ENCODE measurements at regions of chr20 and their contacts with region 1.

Region 1: DNA sequence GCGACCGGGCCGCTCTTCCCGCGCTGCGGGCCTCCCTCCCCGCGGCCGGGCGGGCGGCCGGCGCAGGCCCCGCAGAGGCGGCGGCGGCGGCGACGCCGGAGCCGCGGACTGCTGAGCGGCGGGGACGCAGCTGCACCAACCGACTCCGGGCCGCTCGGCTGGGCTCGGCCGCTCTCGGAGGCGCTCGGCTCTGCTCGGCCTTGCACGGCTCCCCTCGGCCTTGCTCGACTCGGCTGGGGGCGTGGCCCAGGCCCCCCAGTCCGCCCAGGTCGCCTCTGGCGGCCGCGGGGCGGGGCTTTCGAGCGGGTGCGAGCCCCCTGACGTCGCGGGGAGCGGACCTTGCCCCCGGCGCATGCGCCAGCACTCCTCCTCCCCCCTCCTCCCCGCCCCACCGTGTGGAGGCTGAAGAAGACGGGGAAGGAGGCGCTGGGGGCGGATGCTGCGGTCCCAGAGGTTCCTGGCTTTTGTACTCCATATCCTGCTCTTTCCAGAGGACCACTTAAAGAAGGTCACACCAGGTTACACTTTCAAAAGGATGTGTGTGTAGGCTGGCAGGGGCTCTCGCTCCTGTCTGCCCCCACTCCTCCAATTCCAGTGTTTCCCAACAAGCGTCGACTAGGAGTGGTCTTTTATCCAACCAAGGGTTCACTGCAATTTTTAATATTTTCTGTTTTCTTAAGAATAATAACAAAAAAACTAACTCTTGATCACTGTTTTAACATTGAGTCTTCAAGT is at the start of gene ZHX3:
- DNase-seq: peak; percentile 99
- H3K4me3 ChIP-seq: peak within 1 kb of the TSS; percentile 58 to 91 (median 72)
- H3K27ac ChIP-seq: peak within 1 kb of the TSS; percentile 87 to 95 (median 92)
- H3K4me1 ChIP-seq: peaks cover 0 to 35% (median 23%) of the 10 kb centered on the region in 4 donors
- H3K27me3 ChIP-seq: no peaks in the 10 kb centered on the region
- CTCF ChIP-seq: no peak
- EP300 ChIP-seq: no peak
- POLR2A ChIP-seq: no peak
- total RNA-seq, gene ZHX3: 39.2 to 69.0 (median 51.1) TPM

Region 2: DNA sequence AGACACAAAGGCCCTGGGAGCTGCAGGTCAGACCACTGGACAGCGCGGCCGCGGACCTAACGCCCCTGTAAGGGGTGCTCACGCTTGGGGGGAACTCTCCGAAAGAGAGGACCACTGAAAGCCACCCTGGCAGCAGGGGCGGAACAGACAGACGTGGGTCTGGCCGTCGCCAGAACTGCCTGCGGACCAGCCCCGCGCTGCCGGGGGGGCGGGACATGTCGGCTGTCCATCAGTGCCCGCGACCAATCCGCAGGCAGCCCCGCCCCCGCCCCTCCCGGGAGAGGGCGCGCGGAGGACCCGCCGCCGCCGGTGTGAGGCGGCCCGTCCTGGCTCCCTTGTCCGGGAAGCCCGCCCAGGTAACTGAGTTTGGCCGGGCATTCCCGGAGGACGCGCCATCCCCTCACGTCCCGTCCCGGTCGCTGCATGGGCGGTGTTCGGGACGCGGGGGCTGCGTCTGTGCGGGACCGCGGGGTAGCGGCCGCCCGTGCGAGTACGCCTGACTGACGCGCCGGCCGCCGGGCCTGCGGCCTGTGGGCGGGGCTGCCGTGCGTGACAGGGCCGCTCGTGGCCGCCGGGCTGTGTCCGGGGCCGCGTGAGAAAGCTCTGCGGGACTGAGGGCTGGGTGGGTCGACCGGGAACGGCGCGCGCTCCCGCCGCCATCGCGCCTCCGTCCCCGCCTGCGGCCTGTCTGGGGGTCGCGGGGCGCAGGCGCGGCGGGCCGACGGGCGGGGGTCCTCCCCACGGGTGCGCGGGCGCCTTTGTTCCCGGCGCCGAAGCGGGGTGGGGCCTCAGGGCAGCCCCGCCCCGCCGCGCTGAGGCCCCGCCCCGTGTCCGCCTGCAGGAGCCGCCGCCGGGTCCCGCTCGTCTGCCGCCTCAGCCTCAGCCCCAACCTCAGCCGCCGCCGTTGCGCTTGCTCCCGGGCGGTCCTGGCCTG is 180.8 kb before region 1 on chr20 and contains the start of gene PLCG1:
- intact Hi-C with region 1: loop called (anchors 5 kb)
- DNase-seq: peak; percentile 95
- H3K4me3 ChIP-seq: peak within 1 kb of the TSS; percentile 57 to 83 (median 73)
- H3K27ac ChIP-seq: peak within 1 kb of the TSS; percentile 94 to 96 (median 96)
- H3K4me1 ChIP-seq: peaks cover 0 to 47% (median 38%) of the 10 kb centered on the region in 4 donors
- H3K27me3 ChIP-seq: no peaks in the 10 kb centered on the region
- CTCF ChIP-seq: no peak
- EP300 ChIP-seq: no peak
- POLR2A ChIP-seq: peak; percentile 29 to 66
- total RNA-seq, gene PLCG1: 48.5 to 152 (median 67.0) TPM

Region 3: GRCh38 chr20:41232973-41233926 is 84.5 kb before region 1 on chr20:
- intact Hi-C with region 1: loop called (anchors 5 kb)
- DNase-seq: no peak
- H3K4me3 ChIP-seq: no peak overlapping the region
- H3K27ac ChIP-seq: peak overlapping the region; percentile 59 to 75 (median 62)
- H3K4me1 ChIP-seq: peaks cover 0 to 46% (median 40%) of the 10 kb centered on the region in 4 donors
- H3K27me3 ChIP-seq: no peaks in the 10 kb centered on the region
- CTCF ChIP-seq: no peak
- EP300 ChIP-seq: no peak
- POLR2A ChIP-seq: no peak

Region 4: GRCh38 chr20:41249406-41250281 is 68.1 kb before region 1 on chr20:
- intact Hi-C with region 1: loop called (anchors 1 kb)
- DNase-seq: peak; percentile 92
- H3K4me3 ChIP-seq: no peak overlapping the region
- H3K27ac ChIP-seq: peak overlapping the region; percentile 85 to 93 (median 91)
- H3K4me1 ChIP-seq: peaks cover 0 to 71% (median 64%) of the 10 kb centered on the region in 4 donors
- H3K27me3 ChIP-seq: no peaks in the 10 kb centered on the region
- CTCF ChIP-seq: peak in 1 of 4 experiments; percentile 27
- EP300 ChIP-seq: peak in 1 of 4 donors; percentile 26
- POLR2A ChIP-seq: no peak

Region 5: GRCh38 chr20:41513829-41514228 is 196.1 kb after region 1 on chr20:
- intact Hi-C with region 1: no loop called
- DNase-seq: no peak
- H3K4me3 ChIP-seq: no peak overlapping the region
- H3K27ac ChIP-seq: no peak overlapping the region
- H3K4me1 ChIP-seq: peaks cover 0 to 43% (median 41%) of the 10 kb centered on the region in 4 donors
- H3K27me3 ChIP-seq: no peaks in the 10 kb centered on the region
- CTCF ChIP-seq: no peak
- EP300 ChIP-seq: no peak
- POLR2A ChIP-seq: no peak